ENCODE measurements at regions of chr7 and their contacts with region 1.

Region 1: DNA sequence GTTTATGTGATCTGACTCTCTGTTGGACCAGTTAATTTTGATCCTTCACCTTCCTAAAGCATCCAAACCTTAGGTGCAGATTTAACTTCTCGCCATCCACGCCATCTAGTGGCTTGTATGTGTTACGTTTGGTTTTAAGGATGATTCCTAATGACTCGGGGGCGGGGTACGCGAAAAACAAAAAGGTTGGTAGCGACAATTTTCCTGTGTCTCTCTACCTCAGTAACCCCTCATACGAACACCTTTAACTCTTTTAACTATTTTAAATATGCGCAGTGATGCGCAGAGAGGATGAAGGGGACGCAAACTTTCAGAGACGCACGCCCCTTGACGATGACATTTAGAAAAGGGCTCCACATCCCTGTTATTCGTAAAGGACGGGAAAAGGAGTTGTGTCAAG is 714 bp upstream of the KCND2 start:
- DNase-seq: peak in 2 of 4 donors; percentile 23 to 28
- ATAC-seq: peak; percentile 90
- H3K4me3 ChIP-seq: peak overlapping the region; percentile 27 to 32
- H3K27ac ChIP-seq: no peak overlapping the region
- H3K4me1 ChIP-seq: peaks cover 0 to 8% of the 10 kb centered on the region in 2 donors
- H3K27me3 ChIP-seq: peaks cover 3 to 36% of the 10 kb centered on the region in 2 donors
- CTCF ChIP-seq: peak; percentile 39 to 49

Region 2: GRCh38 chr7:119935418-119936025 is 336.7 kb before region 1 on chr7:
- intact Hi-C with region 1: loop called in 1 of 2 experiments (anchors 10 kb)
- DNase-seq: peak in 2 of 4 donors; percentile 23 to 42
- ATAC-seq: peak; percentile 44
- H3K4me3 ChIP-seq: no peak overlapping the region
- H3K27ac ChIP-seq: no peak overlapping the region
- H3K4me1 ChIP-seq: no peaks in the 10 kb centered on the region
- H3K27me3 ChIP-seq: no peaks in the 10 kb centered on the region
- CTCF ChIP-seq: peak in 1 of 2 donors; percentile 9